OCI-LY7 (cell line): ENCODE measurements at regions of chr11 and their contacts with region 1.

Region 1: GRCh38 chr11:35391922-35392813 is 27.2 kb downstream of the SLC1A2 start:
- DNase-seq: peak; percentile 70
- H3K4me3 ChIP-seq: no peak overlapping the region
- H3K27ac ChIP-seq: no peak overlapping the region
- H3K4me1 ChIP-seq: peaks cover 13% of the 10 kb centered on the region
- CTCF ChIP-seq: peak; percentile 97

Region 2: GRCh38 chr11:34512840-34513681 is 879.1 kb before region 1 on chr11:
- CTCF ChIA-PET with region 1: no interaction called
- POLR2A ChIA-PET with region 1: no interaction called
- intact Hi-C with region 1: loop called (anchors 5 kb)
- DNase-seq: peak; percentile 52
- H3K4me3 ChIP-seq: no peak overlapping the region
- H3K27ac ChIP-seq: no peak overlapping the region
- H3K4me1 ChIP-seq: no peaks in the 10 kb centered on the region
- CTCF ChIP-seq: peak; percentile 90

Region 3: GRCh38 chr11:34585735-34586487 is 806.3 kb before region 1 on chr11:
- CTCF ChIA-PET with region 1: no interaction called
- POLR2A ChIA-PET with region 1: no interaction called
- intact Hi-C with region 1: loop called (anchors 1 kb)
- DNase-seq: peak; percentile 33
- H3K4me3 ChIP-seq: no peak overlapping the region
- H3K27ac ChIP-seq: no peak overlapping the region
- H3K4me1 ChIP-seq: peaks cover 7% of the 10 kb centered on the region
- CTCF ChIP-seq: peak; percentile 84

Region 4: GRCh38 chr11:34926101-34926830 is 465.9 kb before region 1 on chr11:
- CTCF ChIA-PET with region 1: no interaction called
- POLR2A ChIA-PET with region 1: interaction called, 4 read pairs
- intact Hi-C with region 1: loop called (anchors 1 kb)
- DNase-seq: peak; percentile 58
- H3K4me3 ChIP-seq: no peak overlapping the region
- H3K27ac ChIP-seq: no peak overlapping the region
- H3K4me1 ChIP-seq: no peaks in the 10 kb centered on the region
- CTCF ChIP-seq: peak; percentile 97

Region 5: DNA sequence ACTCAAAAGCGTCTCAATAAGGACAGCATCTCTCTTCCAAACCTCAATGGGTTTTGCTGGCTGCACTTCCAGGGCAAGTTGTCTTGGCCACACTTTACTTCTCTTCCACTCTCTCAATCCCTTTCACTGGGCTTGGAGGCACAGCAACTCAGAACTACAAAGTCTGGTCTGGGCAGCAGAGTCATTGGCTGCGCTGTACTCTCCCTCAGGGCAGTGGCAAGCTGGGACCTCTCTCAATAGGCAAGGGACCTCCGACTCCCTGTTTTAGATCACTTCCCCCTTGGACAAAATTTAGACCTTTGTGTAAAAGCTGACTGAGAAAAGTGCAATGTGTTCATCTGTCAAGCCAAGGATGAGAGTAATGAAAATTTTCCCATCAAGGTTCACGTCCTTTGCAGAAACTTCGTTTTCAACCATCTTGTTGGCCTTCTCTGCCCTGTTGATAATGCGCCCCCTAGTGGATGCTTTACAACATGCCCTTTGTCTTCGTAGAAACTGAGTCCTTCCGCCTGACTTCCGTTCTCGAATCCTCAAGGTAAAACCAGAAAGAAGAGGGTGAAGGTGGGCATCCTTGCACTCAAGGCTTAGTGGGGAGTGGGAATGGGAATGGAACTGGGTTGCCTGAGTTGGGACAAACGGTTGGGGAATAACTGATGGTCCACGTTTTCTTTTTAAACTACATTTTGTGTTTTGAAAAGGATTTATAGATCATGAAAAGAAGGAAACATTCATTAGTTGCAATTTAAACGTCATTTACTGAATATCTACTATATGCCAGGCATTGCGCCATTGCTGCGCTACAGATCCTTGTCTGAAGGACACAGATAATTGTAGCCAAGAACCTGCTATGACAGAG is 154.1 kb before region 1 on chr11:
- CTCF ChIA-PET with region 1: no interaction called
- POLR2A ChIA-PET with region 1: no interaction called
- intact Hi-C with region 1: loop called (anchors 2 kb)
- DNase-seq: peak; percentile 83
- H3K4me3 ChIP-seq: no peak overlapping the region
- H3K27ac ChIP-seq: no peak overlapping the region
- H3K4me1 ChIP-seq: peaks cover 12% of the 10 kb centered on the region
- CTCF ChIP-seq: peak; percentile 99

Region 6: GRCh38 chr11:35313066-35313759 is 79.0 kb before region 1 on chr11:
- CTCF ChIA-PET with region 1: no interaction called
- POLR2A ChIA-PET with region 1: no interaction called
- intact Hi-C with region 1: loop called (anchors 5 kb)
- DNase-seq: peak; percentile 54
- H3K4me3 ChIP-seq: no peak overlapping the region
- H3K27ac ChIP-seq: peak overlapping the region; percentile 5
- H3K4me1 ChIP-seq: peaks cover 12% of the 10 kb centered on the region
- CTCF ChIP-seq: no peak

Region 7: DNA sequence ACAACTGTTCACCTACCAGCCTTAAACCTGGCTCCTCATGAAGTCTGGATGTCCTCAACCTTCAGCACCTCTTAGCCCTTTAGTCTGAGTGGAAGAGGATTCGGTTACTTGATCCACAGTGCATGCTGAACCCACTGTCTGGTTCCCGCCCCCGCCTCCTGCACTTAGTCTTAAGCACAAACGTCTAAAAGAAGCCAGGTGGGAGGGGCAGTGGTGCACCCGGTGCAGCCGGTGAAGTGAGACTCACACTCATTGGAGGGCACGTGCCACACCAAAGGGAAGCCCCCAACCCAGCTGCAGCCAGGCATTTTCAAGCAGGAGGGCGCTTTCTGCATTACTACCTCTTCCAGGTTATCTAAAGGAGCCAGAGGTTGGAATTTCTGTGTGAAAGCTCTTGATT is 750.3 kb after region 1 on chr11:
- CTCF ChIA-PET with region 1: no interaction called
- POLR2A ChIA-PET with region 1: no interaction called
- intact Hi-C with region 1: no loop called
- DNase-seq: no peak
- H3K4me3 ChIP-seq: no peak overlapping the region
- H3K27ac ChIP-seq: no peak overlapping the region
- H3K4me1 ChIP-seq: no peaks in the 10 kb centered on the region
- CTCF ChIP-seq: no peak